ENCODE measurements at regions of chr3 and their contacts with region 1.

Region 1: DNA sequence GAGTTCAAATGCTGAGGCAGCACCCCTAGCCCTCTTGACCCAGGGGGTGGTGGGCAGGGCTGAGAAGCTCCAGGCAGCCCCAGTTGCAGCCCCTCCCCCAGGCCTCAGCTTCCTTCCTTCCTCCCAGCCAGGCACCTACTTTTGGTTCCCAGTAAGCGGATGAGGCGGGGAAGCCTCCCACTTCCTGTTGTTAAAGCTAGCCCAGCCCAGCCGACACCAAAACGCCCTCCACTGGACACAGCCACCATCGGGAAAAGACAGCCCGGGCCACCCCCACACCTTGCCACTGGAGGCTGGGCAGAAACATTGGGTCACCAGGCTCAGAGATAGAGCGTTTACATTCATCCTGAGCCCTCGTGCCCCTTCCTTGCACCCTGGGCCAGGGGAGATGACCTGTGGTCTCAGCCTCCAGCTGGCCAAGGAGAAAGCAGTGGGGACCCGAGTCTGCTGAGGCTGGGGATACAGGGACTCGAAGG is 3.5 kb downstream of the DUSP7 start:
- DNase-seq: peak; percentile 84 to 89 (median 86)
- ATAC-seq: peak; percentile 6 to 29 (median 26)
- H3K4me3 ChIP-seq: no peak overlapping the region
- H3K27ac ChIP-seq: peak overlapping the region; percentile 36 to 71 (median 60)
- H3K4me1 ChIP-seq: peaks cover 0 to 15% (median 2%) of the 10 kb centered on the region in 4 donors
- H3K27me3 ChIP-seq: no peaks in the 10 kb centered on the region
- CTCF ChIP-seq: peak in 2 of 4 donors; percentile 11 to 19
- POLR2A ChIP-seq: no peak

Region 2: DNA sequence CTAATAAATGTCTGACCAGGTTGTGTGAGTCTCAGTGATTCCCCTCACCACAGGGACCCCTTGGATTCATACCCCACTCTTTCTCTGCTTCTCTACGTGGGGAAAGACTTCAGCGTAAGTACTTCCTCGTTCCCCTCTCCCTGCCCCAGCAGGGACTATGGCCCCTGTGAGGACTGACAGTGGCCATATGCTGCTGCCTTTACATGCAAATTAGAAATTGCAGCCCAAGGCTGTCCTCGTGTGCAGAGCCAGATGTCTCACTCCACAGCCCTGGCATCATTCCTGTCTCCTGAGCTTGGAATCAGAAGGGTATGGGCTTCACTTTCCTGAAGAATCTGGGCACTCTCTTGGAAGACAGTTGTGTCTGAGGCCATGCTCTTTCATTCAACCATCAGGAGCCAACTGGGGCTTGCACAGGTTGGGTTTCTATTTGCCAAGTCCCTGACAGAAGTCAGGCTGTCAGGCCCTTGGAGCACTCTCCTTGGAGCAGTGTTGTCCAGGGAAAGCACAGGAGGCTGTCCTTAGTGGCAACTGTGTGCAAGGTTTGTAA is 222.0 kb before region 1 on chr3:
- intact Hi-C with region 1: no loop called
- DNase-seq: no peak
- ATAC-seq: no peak
- H3K4me3 ChIP-seq: no peak overlapping the region
- H3K27ac ChIP-seq: no peak overlapping the region
- H3K4me1 ChIP-seq: no peaks in the 10 kb centered on the region
- H3K27me3 ChIP-seq: no peaks in the 10 kb centered on the region
- CTCF ChIP-seq: no peak
- POLR2A ChIP-seq: no peak

Region 3: DNA sequence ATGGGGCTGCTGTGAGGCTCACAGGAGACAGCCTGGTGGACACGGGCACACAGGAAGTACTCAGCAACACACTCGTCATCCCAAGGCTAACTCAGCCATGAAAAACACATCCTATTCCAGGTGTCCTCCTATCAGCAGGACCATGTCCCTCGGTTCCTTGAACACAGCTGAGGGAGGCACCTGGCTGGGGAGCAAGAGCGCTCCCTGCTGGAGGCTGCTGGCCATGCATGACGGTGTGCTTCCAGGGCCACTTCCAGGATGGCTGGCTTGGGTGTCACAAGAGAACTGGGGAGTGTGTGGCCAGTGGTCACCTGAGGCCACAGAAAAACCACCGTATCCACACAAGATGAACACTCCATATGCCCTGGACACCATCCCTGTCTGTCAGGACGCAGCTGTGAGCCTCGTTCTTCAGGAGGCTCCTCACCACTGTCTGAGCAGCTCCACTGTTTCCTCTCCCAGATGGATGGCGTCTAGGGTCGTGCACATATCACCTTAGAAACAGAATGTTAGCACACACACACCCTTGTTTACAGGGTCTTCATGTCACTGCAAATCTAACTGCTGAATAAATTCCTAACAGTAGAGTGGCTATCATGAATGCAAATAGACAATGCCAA is 70.3 kb after region 1 on chr3:
- intact Hi-C with region 1: loop called in 1 of 2 experiments (anchors 5 kb)
- DNase-seq: peak; percentile 73 to 84 (median 75)
- ATAC-seq: peak; percentile 86 to 92 (median 90)
- H3K4me3 ChIP-seq: no peak overlapping the region
- H3K27ac ChIP-seq: no peak overlapping the region
- H3K4me1 ChIP-seq: no peaks in the 10 kb centered on the region
- H3K27me3 ChIP-seq: no peaks in the 10 kb centered on the region
- CTCF ChIP-seq: peak; percentile 92 to 97 (median 94)
- POLR2A ChIP-seq: no peak

Region 4: GRCh38 chr3:52136513-52136912 is 83.6 kb after region 1 on chr3:
- intact Hi-C with region 1: no loop called
- DNase-seq: peak in 1 of 3 donors; percentile 51
- ATAC-seq: peak in 3 of 4 donors; percentile 62 to 75 (median 66)
- H3K4me3 ChIP-seq: no peak overlapping the region
- H3K27ac ChIP-seq: no peak overlapping the region
- H3K4me1 ChIP-seq: no peaks in the 10 kb centered on the region
- H3K27me3 ChIP-seq: no peaks in the 10 kb centered on the region
- CTCF ChIP-seq: no peak
- POLR2A ChIP-seq: no peak